ENCODE measurements at regions of chrX and their contacts with region 1.

Region 1: DNA sequence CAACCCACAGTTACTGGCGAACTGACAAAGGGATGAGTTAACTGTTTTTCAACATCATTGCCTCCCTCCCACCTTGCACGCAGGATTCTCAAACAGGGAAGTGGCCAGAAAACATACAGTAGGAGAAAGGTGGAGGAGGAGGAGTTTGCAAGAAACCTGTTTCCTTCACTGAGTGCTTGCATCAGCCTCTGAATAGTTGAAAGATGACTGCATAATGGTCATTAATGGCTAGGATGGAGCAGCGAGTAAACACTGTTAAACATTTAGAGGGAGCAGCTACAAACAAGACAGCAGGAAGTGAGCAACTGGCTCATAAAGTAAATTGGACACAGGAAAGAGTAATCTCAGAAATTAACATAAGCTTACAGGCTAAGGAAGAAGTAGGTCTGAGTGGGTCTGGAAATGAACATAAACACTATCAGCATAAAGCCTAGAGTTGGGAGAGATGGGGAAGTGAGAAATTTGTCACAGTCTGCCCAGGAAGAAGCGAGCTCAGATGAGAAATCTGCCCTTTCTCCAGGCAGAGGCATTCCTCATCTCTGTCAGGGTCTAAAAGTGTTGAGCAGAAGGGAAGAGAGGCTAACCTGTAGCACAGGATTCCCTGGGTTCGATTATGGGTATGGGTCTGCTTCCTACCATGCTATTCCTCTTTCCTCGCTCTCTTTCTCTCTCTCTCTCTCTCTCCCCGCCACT is 38.6 kb downstream of the TRPC5OS start:
- ATAC-seq: peak in 5 of 8 experiments; percentile 24 to 89 (median 77)
- H3K4me3 ChIP-seq: no peak overlapping the region
- H3K27ac ChIP-seq: no peak overlapping the region
- H3K4me1 ChIP-seq: peaks cover 0 to 4% of the 10 kb centered on the region in 2 donors

Region 2: GRCh38 chrX:111302284-111302683 is 612.3 kb before region 1 on chrX:
- in situ Hi-C with region 1: no loop called
- ATAC-seq: no peak
- H3K4me3 ChIP-seq: no peak overlapping the region
- H3K27ac ChIP-seq: no peak overlapping the region
- H3K4me1 ChIP-seq: no peaks in the 10 kb centered on the region

Region 3: GRCh38 chrX:111460607-111461006 is 453.9 kb before region 1 on chrX:
- in situ Hi-C with region 1: no loop called
- ATAC-seq: no peak
- H3K4me3 ChIP-seq: no peak overlapping the region
- H3K27ac ChIP-seq: no peak overlapping the region
- H3K4me1 ChIP-seq: no peaks in the 10 kb centered on the region

Region 4: GRCh38 chrX:111823128-111823527 is 91.4 kb before region 1 on chrX:
- in situ Hi-C with region 1: loop called in 1 of 9 experiments (anchors 25 kb)
- ATAC-seq: peak in 7 of 8 experiments; percentile 20 to 83 (median 42)
- H3K4me3 ChIP-seq: no peak overlapping the region
- H3K27ac ChIP-seq: no peak overlapping the region
- H3K4me1 ChIP-seq: peaks cover 0 to 4% of the 10 kb centered on the region in 2 donors

Measured in motor neuron (in vitro differentiated cells).